ENCODE measurements at regions of chr6 and their contacts with region 1.

Region 1: DNA sequence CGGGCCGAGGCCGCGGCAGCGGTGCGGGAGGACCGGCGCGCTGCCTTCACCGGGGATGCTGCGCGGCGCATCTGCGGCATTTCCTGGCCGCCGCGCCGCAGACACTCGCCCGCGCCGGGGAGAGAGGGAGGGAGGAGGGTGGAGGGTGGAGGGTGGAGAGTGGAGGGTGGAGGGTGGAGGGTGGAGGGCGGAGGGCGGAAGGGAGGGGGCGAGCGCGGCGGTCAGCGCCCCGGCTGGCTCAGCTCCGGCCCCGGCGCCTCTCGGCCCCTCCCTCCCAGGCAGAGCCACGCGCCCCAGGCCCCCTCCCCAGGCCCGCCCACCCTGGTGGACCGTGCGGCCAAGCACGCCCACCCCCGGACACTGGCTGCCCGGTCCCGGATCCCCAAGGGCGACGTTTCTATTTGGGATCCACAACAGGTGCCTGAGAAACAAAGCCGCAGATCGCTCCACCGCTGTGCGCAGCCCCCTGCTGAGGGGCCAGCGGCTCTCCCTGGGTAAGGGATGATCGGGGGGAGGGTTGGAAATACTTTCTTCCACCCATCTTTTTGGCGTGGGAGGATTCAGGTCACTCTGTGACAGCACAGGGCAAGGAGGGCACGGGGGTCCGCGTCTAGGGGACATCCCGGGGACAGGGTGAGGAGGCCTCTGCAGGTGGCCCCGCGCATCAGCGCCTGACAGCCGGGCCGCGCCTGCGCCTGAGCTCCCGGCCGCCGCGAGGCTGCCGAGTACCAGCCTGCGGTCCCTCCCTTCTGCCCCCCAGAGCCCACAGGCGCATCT is 111.1 kb upstream of the BEND6 start:
- DNase-seq: peak; percentile 55 to 56
- H3K4me3 ChIP-seq: peak overlapping the region in 2 of 3 donors; percentile 39 to 57
- H3K27ac ChIP-seq: peak overlapping the region; percentile 39 to 79 (median 48)
- H3K4me1 ChIP-seq: peaks cover 0 to 4% of the 10 kb centered on the region in 2 donors
- H3K27me3 ChIP-seq: no peaks in the 10 kb centered on the region
- CTCF ChIP-seq: peak in 4 of 6 experiments; percentile 12 to 46 (median 34)
- POLR2A ChIP-seq: peak in 1 of 2 donors; percentile 32

Region 2: GRCh38 chr6:56764081-56764566 is 79.6 kb before region 1 on chr6:
- intact Hi-C with region 1: loop called (anchors 10 kb)
- DNase-seq: peak in 1 of 2 donors; percentile 37
- H3K4me3 ChIP-seq: no peak overlapping the region
- H3K27ac ChIP-seq: no peak overlapping the region
- H3K4me1 ChIP-seq: peaks cover 0 to 8% of the 10 kb centered on the region in 2 donors
- H3K27me3 ChIP-seq: no peaks in the 10 kb centered on the region
- CTCF ChIP-seq: peak in 5 of 6 experiments; percentile 10 to 64 (median 40)
- POLR2A ChIP-seq: no peak

Region 3: DNA sequence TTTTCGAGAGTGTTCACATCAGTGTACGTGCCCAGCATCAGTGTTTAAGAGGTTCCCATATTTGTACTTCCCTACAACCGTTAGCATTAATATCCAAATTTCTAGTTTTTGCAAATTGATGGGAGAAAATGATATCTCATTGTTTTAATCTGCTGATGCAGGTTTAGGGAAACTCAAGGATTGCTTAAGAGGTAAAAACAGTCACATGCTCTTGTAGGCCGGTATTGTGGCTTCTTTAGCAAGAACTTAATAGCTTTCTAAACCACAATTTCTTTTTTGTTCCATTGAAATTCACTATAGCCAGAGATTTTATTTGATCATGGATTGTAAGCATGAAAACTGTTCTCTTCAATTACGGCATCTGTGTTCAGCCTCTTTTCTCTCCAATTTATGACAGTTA is 140.6 kb after region 1 on chr6:
- intact Hi-C with region 1: no loop called
- DNase-seq: no peak
- H3K4me3 ChIP-seq: no peak overlapping the region
- H3K27ac ChIP-seq: no peak overlapping the region
- H3K4me1 ChIP-seq: no peaks in the 10 kb centered on the region
- H3K27me3 ChIP-seq: no peaks in the 10 kb centered on the region
- CTCF ChIP-seq: no peak
- POLR2A ChIP-seq: no peak

Measured in thyroid gland (tissue), 4 donors.